ENCODE measurements at regions of chr12 and their contacts with region 1.

Region 1: GRCh38 chr12:48988030-48988649 is 10.0 kb downstream of the WNT1 start:
- DNase-seq: peak in 1 of 2 donors; percentile 67
- ATAC-seq: peak in 7 of 8 donors; percentile 34 to 62 (median 54)
- H3K4me3 ChIP-seq: no peak overlapping the region
- H3K27ac ChIP-seq: no peak overlapping the region
- H3K4me1 ChIP-seq: peaks cover 0 to 20% (median 7%) of the 10 kb centered on the region in 9 donors
- H3K27me3 ChIP-seq: peaks cover 0 to 93% (median 67%) of the 10 kb centered on the region in 7 donors
- CTCF ChIP-seq: peak; percentile 71 to 95 (median 82)

Region 2: DNA sequence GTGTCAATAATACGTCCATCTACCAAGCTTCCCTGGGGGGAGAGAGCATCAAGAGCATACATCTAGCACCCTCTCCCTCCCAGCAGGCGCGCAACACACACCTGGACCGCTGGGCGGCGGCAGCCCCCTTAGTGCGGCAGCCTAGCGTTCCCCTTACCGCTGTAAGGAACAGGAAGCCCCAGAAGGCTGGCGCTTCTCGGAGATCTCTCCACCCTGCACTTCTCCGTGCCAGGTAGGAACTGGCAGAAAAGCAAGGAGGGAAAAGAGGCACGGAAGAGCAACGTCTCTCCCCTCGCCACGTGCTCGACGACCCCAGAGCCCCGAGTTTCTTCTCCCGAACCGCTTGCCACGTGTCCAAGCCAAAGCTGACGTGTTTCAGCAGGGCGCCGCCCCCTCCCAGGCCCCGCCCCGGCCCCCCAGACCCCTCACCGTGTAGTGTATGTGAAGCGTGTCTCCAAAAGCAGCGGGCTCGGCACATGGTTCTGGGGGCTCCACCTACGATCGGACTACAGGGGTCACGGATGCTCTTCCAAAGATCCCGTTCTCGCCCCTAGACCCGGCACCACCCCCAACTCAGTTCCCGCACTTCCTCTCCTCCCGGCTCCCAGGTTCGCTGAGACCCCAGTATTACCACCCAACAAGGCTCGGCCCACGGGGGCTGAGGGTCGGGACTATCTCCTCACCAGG is 63.4 kb before region 1 on chr12:
- intact Hi-C with region 1: loop called in 2 of 10 experiments (anchors 5 to 10 kb)
- DNase-seq: peak; percentile 29 to 48
- ATAC-seq: peak; percentile 62 to 86 (median 76)
- H3K4me3 ChIP-seq: peak overlapping the region; percentile 57 to 90 (median 85)
- H3K27ac ChIP-seq: peak overlapping the region in 4 of 10 donors; percentile 37 to 89 (median 56)
- H3K4me1 ChIP-seq: peaks cover 0 to 17% (median 5%) of the 10 kb centered on the region in 9 donors
- H3K27me3 ChIP-seq: no peaks in the 10 kb centered on the region
- CTCF ChIP-seq: peak; percentile 11 to 63 (median 49)

Measured in heart right ventricle (tissue), 16 donors.